HEK293 (cell line): ENCODE measurements at regions of chr11 and their contacts with region 1.

Region 1: GRCh38 chr11:17528181-17528691 is 16.0 kb downstream of the USH1C start:
- H3K4me3 ChIP-seq: no peak overlapping the region
- H3K27ac ChIP-seq: no peak overlapping the region
- H3K4me1 ChIP-seq: no peaks in the 10 kb centered on the region
- CTCF ChIP-seq: peak; percentile 48; the same call in 1 of the 2 replicates

Region 2: GRCh38 chr11:17145972-17146371 is 382.3 kb before region 1 on chr11:
- CTCF ChIA-PET with region 1: no interaction called
- POLR2A ChIA-PET with region 1: no interaction called
- H3K4me3 ChIP-seq: no peak overlapping the region
- H3K27ac ChIP-seq: no peak overlapping the region
- H3K4me1 ChIP-seq: no peaks in the 10 kb centered on the region; the same call in 1 of the 2 replicates
- CTCF ChIP-seq: no peak

Region 3: GRCh38 chr11:17230867-17231851 is 297.1 kb before region 1 on chr11:
- CTCF ChIA-PET with region 1: interaction called, 25 read pairs
- POLR2A ChIA-PET with region 1: no interaction called
- H3K4me3 ChIP-seq: no peak overlapping the region
- H3K27ac ChIP-seq: no peak overlapping the region
- H3K4me1 ChIP-seq: no peaks in the 10 kb centered on the region
- CTCF ChIP-seq: no peak

Region 4: DNA sequence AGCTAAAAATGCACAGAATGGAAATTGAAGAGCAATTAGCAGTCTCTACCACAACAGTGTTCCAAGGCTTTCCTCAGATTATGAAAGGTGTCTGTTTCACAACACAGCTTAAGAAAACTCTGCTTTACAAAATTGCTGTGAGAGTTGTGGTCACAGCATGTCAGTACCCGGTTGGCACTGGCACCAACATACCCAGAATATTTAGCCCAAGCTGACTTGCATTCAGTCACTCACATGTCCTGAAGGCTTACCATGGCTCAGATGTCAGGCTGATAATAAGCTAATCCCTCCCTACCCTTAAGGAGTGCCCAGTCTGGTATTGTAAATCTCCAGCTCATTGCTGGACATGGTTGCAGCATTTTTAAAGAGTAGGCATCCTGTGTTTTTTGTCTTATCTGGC is 161.7 kb before region 1 on chr11:
- CTCF ChIA-PET with region 1: interaction called, 17 read pairs
- POLR2A ChIA-PET with region 1: no interaction called
- H3K4me3 ChIP-seq: no peak overlapping the region
- H3K27ac ChIP-seq: no peak overlapping the region
- H3K4me1 ChIP-seq: no peaks in the 10 kb centered on the region
- CTCF ChIP-seq: no peak

Region 5: GRCh38 chr11:17498475-17498874 is 29.8 kb before region 1 on chr11:
- CTCF ChIA-PET with region 1: interaction called, 18 read pairs
- POLR2A ChIA-PET with region 1: no interaction called
- H3K4me3 ChIP-seq: no peak overlapping the region
- H3K27ac ChIP-seq: no peak overlapping the region
- H3K4me1 ChIP-seq: no peaks in the 10 kb centered on the region
- CTCF ChIP-seq: no peak

Region 6: GRCh38 chr11:17538731-17539130 is 10.5 kb after region 1 on chr11:
- CTCF ChIA-PET with region 1: interaction called, 19 read pairs
- POLR2A ChIA-PET with region 1: no interaction called
- H3K4me3 ChIP-seq: no peak overlapping the region
- H3K27ac ChIP-seq: no peak overlapping the region
- H3K4me1 ChIP-seq: no peaks in the 10 kb centered on the region
- CTCF ChIP-seq: no peak

Region 7: GRCh38 chr11:17673951-17674350 is 145.7 kb after region 1 on chr11:
- CTCF ChIA-PET with region 1: no interaction called
- POLR2A ChIA-PET with region 1: no interaction called
- H3K4me3 ChIP-seq: no peak overlapping the region
- H3K27ac ChIP-seq: no peak overlapping the region
- H3K4me1 ChIP-seq: no peaks in the 10 kb centered on the region
- CTCF ChIP-seq: no peak